Activated CD4-positive, alpha-beta T cell treated with anti-CD3 and anti-CD28 coated beads for 36 hours (primary cell): ENCODE measurements at regions of chr4 and their contacts with region 1.

Region 1: DNA sequence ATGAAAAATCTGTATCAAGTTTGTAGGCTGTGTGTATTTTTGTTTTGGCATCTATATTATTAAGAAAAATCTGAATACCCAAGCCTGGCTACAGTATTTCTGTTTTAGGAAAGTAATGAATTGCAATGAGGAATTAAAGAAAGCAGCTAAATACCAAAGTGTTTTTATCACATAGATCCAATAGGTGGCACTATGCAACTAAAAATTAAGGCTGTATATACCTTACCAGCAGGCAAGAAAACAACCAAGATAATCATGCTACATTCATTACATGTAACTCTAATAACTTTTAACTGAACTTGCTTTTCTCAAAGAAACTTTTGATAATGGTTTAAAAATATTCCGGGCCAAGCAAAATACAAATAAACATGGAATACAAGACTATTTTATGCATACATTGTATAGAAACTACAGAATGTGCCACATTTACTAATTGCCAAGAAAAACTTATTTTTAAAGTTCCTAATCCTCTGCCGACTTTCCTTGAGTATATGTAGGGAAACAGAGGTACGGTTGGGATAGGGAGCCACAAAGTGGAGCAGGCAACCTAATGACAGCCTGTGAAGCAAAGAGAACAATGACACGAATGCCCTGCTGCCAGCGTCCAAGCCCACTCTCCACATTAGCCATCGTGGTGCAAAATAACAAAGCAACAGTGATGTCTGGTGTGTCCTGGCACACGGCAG is 63.7 kb downstream of the SEC24D start:
- DNase-seq: no peak
- ATAC-seq: peak; percentile 55
- H3K4me3 Mint-ChIP-seq: no peak overlapping the region
- H3K27ac Mint-ChIP-seq: no peak overlapping the region
- H3K4me1 Mint-ChIP-seq: no peaks in the 10 kb centered on the region
- H3K27me3 Mint-ChIP-seq: no peaks in the 10 kb centered on the region

Region 2: DNA sequence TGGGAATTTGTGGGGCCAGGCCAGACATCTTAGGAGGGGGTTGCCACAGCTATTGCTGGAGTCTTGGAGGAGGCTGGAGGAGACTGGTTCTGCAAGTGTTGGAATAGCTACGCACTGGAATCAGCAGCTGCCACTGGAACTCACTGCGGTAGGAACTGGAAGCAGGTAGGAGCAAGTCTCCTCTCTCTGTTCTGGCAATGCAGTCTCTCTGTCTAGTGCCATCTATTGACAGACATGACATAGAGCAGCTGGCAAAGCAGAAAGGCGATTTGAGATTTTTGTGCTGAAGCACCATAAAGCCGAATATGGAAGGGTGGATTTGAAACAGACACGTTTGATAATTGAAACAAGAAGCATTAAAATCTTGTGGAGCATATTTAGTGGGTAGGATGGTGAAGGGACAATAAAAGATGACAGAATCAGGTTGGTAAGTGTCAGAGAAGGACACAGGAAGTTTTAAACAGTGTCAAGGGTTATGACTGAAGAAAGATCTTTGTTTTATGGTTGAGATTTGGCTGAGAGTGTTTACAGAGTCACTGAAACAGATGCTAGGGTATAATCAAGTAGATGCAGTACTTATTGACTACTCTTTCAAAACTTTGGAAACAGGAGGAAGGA is 93.0 kb after region 1 on chr4:
- CTCF ChIA-PET with region 1: interaction called, 27 read pairs
- POLR2A ChIA-PET with region 1: no interaction called
- intact Hi-C with region 1: loop called in 1 of 2 experiments (anchors 2 kb)
- DNase-seq: peak; percentile 23
- ATAC-seq: peak; percentile 70
- H3K4me3 Mint-ChIP-seq: no peak overlapping the region
- H3K27ac Mint-ChIP-seq: no peak overlapping the region
- H3K4me1 Mint-ChIP-seq: peaks cover 5% of the 10 kb centered on the region
- H3K27me3 Mint-ChIP-seq: no peaks in the 10 kb centered on the region

Region 3: DNA sequence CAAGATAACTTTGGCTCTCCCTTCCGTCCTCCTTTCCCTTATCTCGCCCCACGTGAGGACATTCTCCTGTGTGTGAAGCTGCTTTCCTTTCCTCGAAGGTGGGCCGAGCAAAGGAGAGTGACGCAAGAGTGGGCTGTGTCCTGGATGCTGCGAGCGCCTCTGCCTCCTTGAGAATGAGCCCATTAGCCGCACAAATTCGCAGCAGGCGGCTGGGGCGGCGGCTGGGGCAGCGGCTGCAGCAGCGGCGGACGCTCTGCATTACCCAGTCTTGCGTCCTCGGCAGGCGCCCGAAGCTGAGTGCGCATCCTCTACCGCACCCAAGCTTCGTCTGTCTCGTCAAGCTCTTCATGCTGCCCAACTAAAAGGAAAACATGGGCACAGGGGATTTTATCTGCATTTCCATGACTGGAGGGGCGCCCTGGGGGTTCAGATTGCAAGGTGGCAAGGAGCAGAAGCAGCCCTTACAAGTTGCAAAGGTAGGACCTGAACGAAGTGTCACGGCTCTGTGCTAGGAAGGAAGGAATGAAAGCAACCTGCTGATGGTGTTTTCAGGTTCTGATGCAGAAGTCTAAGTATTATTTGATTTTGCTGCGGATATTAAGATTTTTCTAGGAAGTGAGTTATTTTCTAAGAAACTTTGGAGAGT is 116.6 kb after region 1 on chr4 and contains the start of gene SYNPO2:
- CTCF ChIA-PET with region 1: interaction called, 43 read pairs
- POLR2A ChIA-PET with region 1: no interaction called
- intact Hi-C with region 1: loop called (anchors 1 kb)
- DNase-seq: peak; percentile 66
- ATAC-seq: peak; percentile 89
- H3K4me3 Mint-ChIP-seq: peak within 1 kb of the TSS; percentile 70
- H3K27ac Mint-ChIP-seq: no peak within 1 kb of the TSS
- H3K4me1 Mint-ChIP-seq: peaks cover 12% of the 10 kb centered on the region
- H3K27me3 Mint-ChIP-seq: peaks cover 37% of the 10 kb centered on the region
- total RNA-seq, gene SYNPO2: 0.16 to 0.28 TPM

Region 4: DNA sequence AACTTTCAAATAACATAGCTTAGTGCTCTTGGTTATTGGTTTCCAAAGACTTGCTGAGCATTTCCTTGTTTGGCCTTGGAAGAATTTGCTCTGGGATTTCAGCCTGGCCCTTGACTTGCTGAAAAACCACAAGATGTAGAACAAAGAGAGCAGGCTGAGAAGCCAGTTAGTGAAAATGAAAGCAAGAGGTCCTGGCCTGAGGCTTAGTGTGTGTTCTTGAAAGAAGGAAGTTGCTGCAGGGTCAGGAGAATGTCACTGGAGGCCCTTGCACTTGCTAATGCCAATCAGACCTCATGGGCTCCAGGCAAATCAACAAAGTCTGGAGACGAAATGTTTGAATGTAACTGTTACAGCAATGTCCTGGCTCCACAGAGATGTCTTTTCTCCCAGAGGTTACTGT is 195.8 kb after region 1 on chr4:
- CTCF ChIA-PET with region 1: interaction called, 11 read pairs
- POLR2A ChIA-PET with region 1: no interaction called
- intact Hi-C with region 1: loop called in 1 of 2 experiments (anchors 10 kb)
- DNase-seq: peak; percentile 8
- ATAC-seq: peak; percentile 55
- H3K4me3 Mint-ChIP-seq: no peak overlapping the region
- H3K27ac Mint-ChIP-seq: no peak overlapping the region
- H3K4me1 Mint-ChIP-seq: peaks cover 8% of the 10 kb centered on the region
- H3K27me3 Mint-ChIP-seq: no peaks in the 10 kb centered on the region

Region 5: DNA sequence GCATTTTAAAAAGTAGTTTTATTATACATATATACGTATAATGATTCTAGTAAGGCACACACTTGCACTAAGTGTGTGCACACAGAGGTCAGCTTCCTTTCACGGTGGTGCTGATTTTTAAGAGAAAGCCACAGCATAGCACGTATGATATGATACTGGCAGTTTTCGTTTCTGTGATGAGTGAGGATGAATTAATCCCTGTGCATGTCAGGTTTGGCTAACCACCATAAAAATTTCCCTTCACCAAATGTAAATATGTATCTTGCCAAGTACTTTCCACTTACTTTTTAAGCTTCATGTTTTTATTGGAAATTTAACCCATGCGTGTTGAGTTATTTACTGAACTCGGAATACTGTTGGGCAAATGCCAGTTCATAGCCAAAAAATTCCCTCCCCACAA is 201.1 kb after region 1 on chr4:
- CTCF ChIA-PET with region 1: interaction called, 11 read pairs
- POLR2A ChIA-PET with region 1: no interaction called
- intact Hi-C with region 1: loop called in 1 of 2 experiments (anchors 10 kb)
- DNase-seq: no peak
- ATAC-seq: no peak
- H3K4me3 Mint-ChIP-seq: no peak overlapping the region
- H3K27ac Mint-ChIP-seq: no peak overlapping the region
- H3K4me1 Mint-ChIP-seq: peaks cover 3% of the 10 kb centered on the region
- H3K27me3 Mint-ChIP-seq: no peaks in the 10 kb centered on the region

Region 6: DNA sequence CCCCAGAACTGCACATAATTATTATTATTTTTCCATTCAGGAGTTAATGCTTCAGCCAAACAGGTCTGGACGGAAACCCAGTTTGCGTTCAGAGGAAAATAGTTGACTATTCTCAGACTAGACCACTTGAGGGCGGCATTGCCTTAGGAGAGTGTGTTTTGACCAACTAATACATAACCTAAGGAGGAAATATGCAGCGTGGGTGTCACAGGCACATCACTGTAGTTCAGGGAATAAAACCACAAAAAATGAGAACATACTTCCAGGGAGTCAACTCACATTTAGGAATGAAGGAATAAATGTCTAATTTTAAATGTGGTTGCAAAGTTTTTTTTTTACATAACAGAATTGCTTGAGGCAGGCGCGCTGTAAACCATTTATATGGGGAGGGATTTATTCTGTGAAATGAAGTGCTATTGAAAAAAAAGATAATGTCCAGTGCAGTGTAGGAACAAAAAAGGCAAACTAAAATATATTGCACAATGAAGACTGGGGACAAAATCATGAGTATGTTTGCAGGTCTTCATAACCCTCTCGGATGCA is 209.7 kb after region 1 on chr4:
- CTCF ChIA-PET with region 1: interaction called, 3 read pairs
- POLR2A ChIA-PET with region 1: no interaction called
- intact Hi-C with region 1: loop called in 1 of 2 experiments (anchors 5 kb)
- DNase-seq: peak; percentile 73
- ATAC-seq: peak; percentile 60
- H3K4me3 Mint-ChIP-seq: no peak overlapping the region
- H3K27ac Mint-ChIP-seq: no peak overlapping the region
- H3K4me1 Mint-ChIP-seq: no peaks in the 10 kb centered on the region
- H3K27me3 Mint-ChIP-seq: peaks cover 7% of the 10 kb centered on the region

Region 7: DNA sequence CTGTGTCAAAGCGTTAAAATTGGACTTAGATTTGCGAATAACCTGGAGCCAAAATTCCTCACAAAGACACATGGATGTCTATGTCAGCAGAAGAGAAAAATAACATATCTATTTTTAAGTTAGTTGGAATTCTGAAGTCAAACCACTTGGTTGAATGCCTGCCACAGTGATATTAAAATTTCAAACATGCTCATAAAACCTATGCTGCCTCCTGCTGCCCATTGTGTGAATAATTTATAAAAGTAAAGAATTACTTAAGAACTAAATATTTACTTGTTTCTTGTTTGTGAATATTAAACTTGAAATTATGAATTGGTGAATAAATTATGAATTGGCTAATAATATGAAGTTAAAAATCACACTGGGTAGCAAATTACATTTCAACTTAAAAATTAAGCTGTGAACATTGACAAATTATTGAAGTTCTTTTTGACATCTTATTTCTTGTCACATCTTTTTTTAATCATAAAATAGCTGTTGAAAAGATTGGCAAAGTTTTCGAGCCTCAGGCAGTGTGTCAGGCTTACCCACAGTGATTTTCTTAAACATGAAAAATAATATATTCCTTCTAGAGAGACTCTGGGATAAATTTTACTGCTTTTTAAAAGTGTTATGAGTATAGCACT is 514.3 kb after region 1 on chr4:
- CTCF ChIA-PET with region 1: no interaction called
- POLR2A ChIA-PET with region 1: no interaction called
- intact Hi-C with region 1: loop called (anchors 5 to 10 kb)
- DNase-seq: peak; percentile 47
- ATAC-seq: no peak
- H3K4me3 Mint-ChIP-seq: no peak overlapping the region
- H3K27ac Mint-ChIP-seq: no peak overlapping the region
- H3K4me1 Mint-ChIP-seq: peaks cover 12% of the 10 kb centered on the region
- H3K27me3 Mint-ChIP-seq: no peaks in the 10 kb centered on the region

Region 8: GRCh38 chr4:119861731-119862130 is 1089.5 kb after region 1 on chr4:
- CTCF ChIA-PET with region 1: no interaction called
- POLR2A ChIA-PET with region 1: no interaction called
- intact Hi-C with region 1: no loop called
- DNase-seq: no peak
- ATAC-seq: no peak
- H3K4me3 Mint-ChIP-seq: no peak overlapping the region
- H3K27ac Mint-ChIP-seq: no peak overlapping the region
- H3K4me1 Mint-ChIP-seq: no peaks in the 10 kb centered on the region
- H3K27me3 Mint-ChIP-seq: peaks cover 2% of the 10 kb centered on the region